Heart left ventricle (tissue), 16 donors: ENCODE measurements at regions of chr17 and their contacts with region 1.

Region 1: DNA sequence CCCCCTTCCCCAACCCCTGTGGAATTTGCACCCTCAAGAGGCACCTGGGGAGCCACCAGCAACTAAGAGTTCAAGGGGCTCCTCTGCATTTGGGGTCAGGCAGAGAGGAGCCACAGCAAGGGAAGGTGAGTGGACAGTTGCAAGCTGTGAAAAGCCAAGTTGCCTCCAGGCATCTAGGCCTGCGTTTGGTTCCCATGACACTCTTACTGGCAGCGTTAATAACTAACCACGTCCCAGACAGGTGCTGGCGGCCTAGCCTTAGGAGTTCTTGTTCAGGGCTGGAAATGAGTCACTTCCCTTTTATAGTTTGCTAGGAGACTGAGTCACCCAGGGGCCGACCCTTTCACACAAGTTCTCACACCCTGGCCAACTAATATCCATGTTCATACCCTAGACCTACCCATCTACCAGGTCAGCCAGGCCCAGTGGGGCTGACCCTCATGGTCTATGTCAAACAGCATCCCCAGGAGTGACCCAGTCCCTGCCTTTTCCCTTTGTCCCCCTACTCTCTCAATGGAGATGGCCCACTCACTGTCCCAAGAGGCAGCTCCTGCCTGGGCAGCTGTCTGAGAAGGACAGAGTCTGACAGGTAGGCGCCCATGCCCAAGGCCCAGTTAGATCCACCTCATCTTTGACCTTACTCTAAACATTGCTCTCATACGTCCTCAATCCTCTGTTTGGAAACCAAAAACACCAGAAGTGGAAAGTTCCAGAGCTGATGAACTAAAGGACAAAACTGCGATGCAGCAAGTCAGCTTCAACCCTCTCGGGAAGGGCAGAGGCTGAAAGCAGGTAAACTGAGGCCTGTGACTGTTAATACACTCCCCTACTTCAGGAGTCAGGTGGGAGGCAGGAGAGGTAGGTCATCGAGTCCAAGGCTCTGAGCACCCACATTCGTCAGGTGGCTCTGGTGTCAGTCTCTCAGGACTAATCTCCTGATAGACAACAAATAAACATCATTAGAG is 300.6 kb downstream of the SOX9 start:
- DNase-seq: peak in 2 of 5 donors; percentile 30 to 56
- ATAC-seq: peak in 3 of 4 donors; percentile 75 to 84 (median 77)
- H3K4me3 ChIP-seq: no peak overlapping the region
- H3K27ac ChIP-seq: no peak overlapping the region
- H3K4me1 ChIP-seq: peaks cover 0 to 19% (median 5%) of the 10 kb centered on the region in 12 donors
- H3K27me3 ChIP-seq: no peaks in the 10 kb centered on the region
- CTCF ChIP-seq: no peak
- POLR2A ChIP-seq: no peak

Region 2: GRCh38 chr17:72266112-72266852 is 155.1 kb before region 1 on chr17:
- intact Hi-C with region 1: loop called in 1 of 10 experiments (anchors 5 kb)
- DNase-seq: no peak
- ATAC-seq: no peak
- H3K4me3 ChIP-seq: no peak overlapping the region
- H3K27ac ChIP-seq: no peak overlapping the region
- H3K4me1 ChIP-seq: peaks cover 0 to 11% (median 0%) of the 10 kb centered on the region in 12 donors
- H3K27me3 ChIP-seq: peaks cover 0 to 10% (median 0%) of the 10 kb centered on the region in 9 donors
- CTCF ChIP-seq: no peak
- POLR2A ChIP-seq: no peak

Region 3: GRCh38 chr17:72318131-72318530 is 103.3 kb before region 1 on chr17:
- intact Hi-C with region 1: no loop called
- DNase-seq: no peak
- ATAC-seq: no peak
- H3K4me3 ChIP-seq: no peak overlapping the region
- H3K27ac ChIP-seq: no peak overlapping the region
- H3K4me1 ChIP-seq: no peaks in the 10 kb centered on the region
- H3K27me3 ChIP-seq: peaks cover 0 to 12% (median 0%) of the 10 kb centered on the region in 9 donors
- CTCF ChIP-seq: no peak
- POLR2A ChIP-seq: no peak